B cell (primary cell): ENCODE measurements at regions of chr11 and their contacts with region 1.

Region 1: DNA sequence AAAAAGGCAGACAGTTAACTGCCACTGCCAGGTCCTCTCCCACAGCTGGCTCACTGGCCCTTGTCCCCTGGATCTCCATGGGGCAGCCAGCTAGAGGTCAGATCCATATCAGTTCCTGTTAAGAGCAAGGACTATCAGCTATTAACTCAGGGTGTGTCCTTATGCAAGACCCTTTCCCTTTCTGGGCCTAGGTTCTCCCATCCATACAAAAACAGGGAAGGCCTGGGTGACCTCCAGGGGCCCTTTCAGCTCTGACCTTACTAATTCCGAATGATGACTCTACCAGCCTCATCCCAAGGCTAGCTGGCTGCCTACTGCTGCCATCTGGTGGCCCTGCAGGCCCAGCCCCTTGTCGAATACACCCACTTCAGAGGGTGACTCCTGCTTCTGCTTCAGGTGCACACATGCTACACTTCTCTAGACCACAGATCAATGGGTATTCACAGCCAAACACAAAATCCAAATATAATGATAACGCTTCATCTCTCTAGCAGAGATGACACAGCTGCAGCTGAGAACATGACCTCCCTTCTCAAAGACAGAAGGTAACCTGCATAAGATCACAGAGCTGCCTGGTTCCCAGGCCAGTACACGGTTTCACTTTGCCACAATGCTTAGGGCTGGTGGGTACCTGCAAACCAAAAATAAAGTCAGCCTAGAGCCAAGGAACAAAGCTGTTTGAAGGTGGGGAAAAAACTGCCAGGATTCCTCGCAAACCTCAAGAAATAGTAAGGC is 34.1 kb downstream of the SERGEF start:
- DNase-seq: peak; percentile 17
- ATAC-seq: no peak
- H3K4me3 ChIP-seq: no peak overlapping the region
- H3K4me3 Mint-ChIP-seq: no peak overlapping the region
- H3K27ac ChIP-seq: no peak overlapping the region
- H3K27ac Mint-ChIP-seq: no peak overlapping the region
- H3K4me1 ChIP-seq: peaks cover 0 to 4% of the 10 kb centered on the region in 2 donors
- H3K4me1 Mint-ChIP-seq: no peaks in the 10 kb centered on the region
- H3K27me3 ChIP-seq: no peaks in the 10 kb centered on the region
- H3K27me3 Mint-ChIP-seq: no peaks in the 10 kb centered on the region
- CTCF ChIP-seq: no peak

Region 2: DNA sequence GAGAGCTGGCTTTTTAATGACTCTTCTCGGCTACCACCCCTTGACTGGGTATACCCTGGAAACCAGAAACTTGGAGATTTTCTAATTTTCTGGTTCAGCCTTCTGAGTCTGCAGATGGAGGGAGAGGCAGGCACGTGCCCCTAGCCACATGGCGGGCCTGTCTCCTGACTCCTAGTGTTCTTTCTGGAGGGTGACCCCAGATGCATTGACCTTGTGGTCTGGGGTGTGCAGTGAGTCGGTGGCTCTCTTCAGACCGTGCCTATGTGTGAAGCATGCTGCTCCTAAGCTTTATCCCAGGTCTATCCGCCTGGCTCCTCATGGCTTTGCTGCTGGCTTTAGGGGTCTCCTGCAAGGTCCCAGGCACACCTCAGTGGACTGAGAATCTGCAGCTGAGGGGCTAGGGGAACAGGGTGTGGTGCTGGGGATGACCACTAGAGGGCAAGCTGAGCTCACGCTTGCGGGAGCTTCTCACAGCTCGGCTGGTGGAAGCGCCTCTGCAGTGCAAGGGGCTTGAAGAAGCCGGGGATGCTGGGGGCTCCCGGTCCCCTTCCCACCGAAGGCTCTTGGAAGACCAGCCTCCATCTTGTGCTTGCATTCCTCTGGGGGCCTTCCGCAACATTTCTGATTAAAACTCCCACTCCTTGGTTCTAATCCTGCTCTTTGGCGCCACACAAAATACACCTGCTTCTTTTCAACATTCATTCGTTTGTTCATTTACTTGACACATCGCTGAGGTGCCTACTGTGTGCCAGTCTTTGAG is 379.8 kb before region 1 on chr11:
- CTCF ChIA-PET with region 1: interaction called, 11 read pairs
- POLR2A ChIA-PET with region 1: no interaction called
- intact Hi-C with region 1: no loop called
- DNase-seq: peak; percentile 59
- ATAC-seq: peak; percentile 81
- H3K4me3 ChIP-seq: no peak overlapping the region
- H3K4me3 Mint-ChIP-seq: no peak overlapping the region
- H3K27ac ChIP-seq: no peak overlapping the region
- H3K27ac Mint-ChIP-seq: no peak overlapping the region
- H3K4me1 ChIP-seq: peaks cover 0 to 2% of the 10 kb centered on the region in 2 donors
- H3K4me1 Mint-ChIP-seq: no peaks in the 10 kb centered on the region
- H3K27me3 ChIP-seq: peaks cover 0 to 2% (median 0%) of the 10 kb centered on the region in 4 experiments
- H3K27me3 Mint-ChIP-seq: peaks cover 8% of the 10 kb centered on the region
- CTCF ChIP-seq: peak; percentile 95

Region 3: DNA sequence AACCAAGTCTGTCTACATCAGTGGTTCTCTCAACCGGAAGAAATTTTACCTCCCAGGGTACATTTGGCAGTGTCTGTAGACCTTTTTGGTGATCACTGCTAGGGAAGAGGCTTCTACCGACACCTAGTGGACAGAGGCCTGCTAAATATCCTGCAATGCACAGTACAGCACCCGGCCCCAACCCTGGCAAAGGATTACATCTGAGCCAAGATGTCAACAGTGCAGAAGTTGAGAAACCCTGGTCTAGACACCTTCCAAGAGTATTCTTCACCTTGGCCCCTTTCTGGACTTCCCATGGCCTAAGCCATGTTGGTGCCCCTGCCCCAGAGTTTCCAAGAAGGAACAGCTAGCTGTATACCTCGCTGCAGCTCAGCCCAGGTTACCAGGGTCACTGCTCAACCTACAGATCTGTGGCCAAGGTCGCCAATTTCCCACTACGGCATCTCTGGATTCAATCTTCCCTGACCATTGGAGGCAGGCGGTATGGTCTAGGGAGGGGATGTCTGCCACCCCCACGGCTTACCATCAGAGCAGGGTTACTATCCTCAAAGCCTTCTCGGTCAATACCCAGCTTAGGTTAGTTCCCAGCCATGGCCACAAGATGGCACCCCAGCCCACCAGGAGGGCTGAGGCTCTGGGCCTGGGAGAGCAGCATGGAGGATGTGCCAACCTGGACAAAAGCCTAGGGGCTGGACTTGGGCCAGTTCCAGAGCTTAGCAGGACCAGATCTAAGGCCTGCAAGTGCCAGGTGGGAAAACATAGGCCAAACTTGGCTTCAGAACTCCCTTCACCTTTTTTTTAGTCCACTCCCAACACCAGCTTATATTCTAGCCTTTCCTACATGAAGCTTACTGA is 247.9 kb before region 1 on chr11:
- CTCF ChIA-PET with region 1: interaction called, 67 read pairs
- POLR2A ChIA-PET with region 1: no interaction called
- intact Hi-C with region 1: no loop called
- DNase-seq: peak; percentile 56
- ATAC-seq: peak; percentile 64
- H3K4me3 ChIP-seq: no peak overlapping the region
- H3K4me3 Mint-ChIP-seq: no peak overlapping the region
- H3K27ac ChIP-seq: no peak overlapping the region
- H3K27ac Mint-ChIP-seq: no peak overlapping the region
- H3K4me1 ChIP-seq: peaks cover 0 to 2% of the 10 kb centered on the region in 2 donors
- H3K4me1 Mint-ChIP-seq: peaks cover 5% of the 10 kb centered on the region
- H3K27me3 ChIP-seq: peaks cover 0 to 44% (median 7%) of the 10 kb centered on the region in 4 experiments
- H3K27me3 Mint-ChIP-seq: peaks cover 48% of the 10 kb centered on the region
- CTCF ChIP-seq: peak; percentile 79

Region 4: GRCh38 chr11:17827006-17827405 is 151.7 kb before region 1 on chr11:
- CTCF ChIA-PET with region 1: no interaction called
- POLR2A ChIA-PET with region 1: no interaction called
- intact Hi-C with region 1: no loop called
- DNase-seq: no peak
- ATAC-seq: no peak
- H3K4me3 ChIP-seq: no peak overlapping the region
- H3K4me3 Mint-ChIP-seq: no peak overlapping the region
- H3K27ac ChIP-seq: no peak overlapping the region
- H3K27ac Mint-ChIP-seq: no peak overlapping the region
- H3K4me1 ChIP-seq: no peaks in the 10 kb centered on the region
- H3K4me1 Mint-ChIP-seq: no peaks in the 10 kb centered on the region
- H3K27me3 ChIP-seq: no peaks in the 10 kb centered on the region
- H3K27me3 Mint-ChIP-seq: no peaks in the 10 kb centered on the region
- CTCF ChIP-seq: no peak

Region 5: GRCh38 chr11:17967661-17968060 is 11.1 kb before region 1 on chr11:
- CTCF ChIA-PET with region 1: interaction called, 49 read pairs
- POLR2A ChIA-PET with region 1: no interaction called
- intact Hi-C with region 1: no loop called
- DNase-seq: no peak
- ATAC-seq: no peak
- H3K4me3 ChIP-seq: no peak overlapping the region
- H3K4me3 Mint-ChIP-seq: no peak overlapping the region
- H3K27ac ChIP-seq: no peak overlapping the region
- H3K27ac Mint-ChIP-seq: no peak overlapping the region
- H3K4me1 ChIP-seq: no peaks in the 10 kb centered on the region
- H3K4me1 Mint-ChIP-seq: no peaks in the 10 kb centered on the region
- H3K27me3 ChIP-seq: no peaks in the 10 kb centered on the region
- H3K27me3 Mint-ChIP-seq: no peaks in the 10 kb centered on the region
- CTCF ChIP-seq: no peak

Region 6: GRCh38 chr11:17991783-17992433 is 13.2 kb after region 1 on chr11:
- CTCF ChIA-PET with region 1: interaction called, 36 read pairs
- POLR2A ChIA-PET with region 1: no interaction called
- intact Hi-C with region 1: no loop called
- DNase-seq: peak; percentile 52
- ATAC-seq: peak; percentile 70
- H3K4me3 ChIP-seq: no peak overlapping the region
- H3K4me3 Mint-ChIP-seq: no peak overlapping the region
- H3K27ac ChIP-seq: no peak overlapping the region
- H3K27ac Mint-ChIP-seq: no peak overlapping the region
- H3K4me1 ChIP-seq: no peaks in the 10 kb centered on the region
- H3K4me1 Mint-ChIP-seq: no peaks in the 10 kb centered on the region
- H3K27me3 ChIP-seq: no peaks in the 10 kb centered on the region
- H3K27me3 Mint-ChIP-seq: no peaks in the 10 kb centered on the region
- CTCF ChIP-seq: peak; percentile 98

Region 7: DNA sequence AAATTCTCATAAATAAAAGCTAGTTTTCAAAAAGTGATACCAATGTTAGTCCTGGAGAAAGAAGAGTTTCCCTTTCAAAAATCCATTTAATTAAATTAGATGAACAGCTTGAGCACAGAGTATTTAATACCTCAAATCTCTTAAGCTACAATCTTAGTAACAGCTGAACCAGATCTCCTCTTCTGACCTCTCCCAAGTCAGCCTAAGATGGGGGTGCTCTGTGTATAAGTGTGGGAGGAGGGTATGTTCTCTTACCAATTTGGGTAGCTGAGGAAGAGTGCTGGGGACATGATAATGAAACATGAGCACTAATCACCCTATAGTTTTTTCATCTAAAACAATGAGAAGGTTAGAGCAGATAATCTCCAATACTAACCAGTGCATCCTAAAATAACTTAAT is 57.7 kb after region 1 on chr11:
- CTCF ChIA-PET with region 1: no interaction called
- POLR2A ChIA-PET with region 1: no interaction called
- intact Hi-C with region 1: no loop called
- DNase-seq: no peak
- ATAC-seq: no peak
- H3K4me3 ChIP-seq: no peak overlapping the region
- H3K4me3 Mint-ChIP-seq: no peak overlapping the region
- H3K27ac ChIP-seq: no peak overlapping the region
- H3K27ac Mint-ChIP-seq: no peak overlapping the region
- H3K4me1 ChIP-seq: no peaks in the 10 kb centered on the region
- H3K4me1 Mint-ChIP-seq: no peaks in the 10 kb centered on the region
- H3K27me3 ChIP-seq: no peaks in the 10 kb centered on the region
- H3K27me3 Mint-ChIP-seq: peaks cover 5% of the 10 kb centered on the region
- CTCF ChIP-seq: no peak